CD14-positive monocyte (primary cell): ENCODE measurements at regions of chr13 and their contacts with region 1.

Region 1: GRCh38 chr13:28475916-28476725 is 18.8 kb downstream of the FLT1 start:
- DNase-seq: peak; percentile 74 to 91 (median 86)
- H3K4me3 ChIP-seq: no peak overlapping the region
- H3K4me3 Mint-ChIP-seq: no peak overlapping the region
- H3K27ac ChIP-seq: peak overlapping the region in 1 of 2 donors; percentile 22
- H3K27ac Mint-ChIP-seq: peak overlapping the region; percentile 71 to 91 (median 80)
- H3K4me1 ChIP-seq: peaks cover 24 to 42% of the 10 kb centered on the region in 2 donors
- H3K4me1 Mint-ChIP-seq: peaks cover 37% of the 10 kb centered on the region
- H3K27me3 ChIP-seq: peaks cover 2 to 10% of the 10 kb centered on the region in 2 donors
- H3K27me3 Mint-ChIP-seq: peaks cover 2 to 10% (median 4%) of the 10 kb centered on the region in 3 donors
- CTCF ChIP-seq: no peak

Region 2: GRCh38 chr13:28442839-28443238 is 33.3 kb before region 1 on chr13:
- intact Hi-C with region 1: no loop called
- DNase-seq: no peak
- H3K4me3 ChIP-seq: no peak overlapping the region
- H3K4me3 Mint-ChIP-seq: no peak overlapping the region
- H3K27ac ChIP-seq: no peak overlapping the region
- H3K27ac Mint-ChIP-seq: no peak overlapping the region
- H3K4me1 ChIP-seq: no peaks in the 10 kb centered on the region
- H3K4me1 Mint-ChIP-seq: no peaks in the 10 kb centered on the region
- H3K27me3 ChIP-seq: peaks cover 3 to 6% of the 10 kb centered on the region in 2 donors
- H3K27me3 Mint-ChIP-seq: peaks cover 0 to 15% (median 12%) of the 10 kb centered on the region in 3 donors
- CTCF ChIP-seq: no peak

Region 3: DNA sequence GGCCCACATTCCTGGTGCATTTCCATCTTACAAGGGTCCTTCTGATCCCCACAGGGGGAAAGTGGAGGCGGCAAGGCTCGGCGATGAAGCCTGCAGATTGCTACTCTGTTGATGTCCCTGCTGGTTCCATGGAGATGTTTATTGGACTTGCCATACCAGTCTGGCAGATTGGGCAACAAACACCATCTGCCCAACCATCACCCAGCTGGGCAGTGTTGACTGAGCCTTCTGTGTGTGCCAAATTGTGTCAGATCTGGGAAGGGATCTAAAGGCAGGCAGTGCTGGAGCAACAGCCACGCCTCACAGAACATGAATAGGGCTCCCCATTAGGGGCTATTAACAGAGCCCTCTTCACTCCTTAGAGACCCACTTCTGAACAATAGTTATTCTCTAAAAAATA is 16.2 kb before region 1 on chr13:
- intact Hi-C with region 1: no loop called
- DNase-seq: no peak
- H3K4me3 ChIP-seq: no peak overlapping the region
- H3K4me3 Mint-ChIP-seq: no peak overlapping the region
- H3K27ac ChIP-seq: no peak overlapping the region
- H3K27ac Mint-ChIP-seq: no peak overlapping the region
- H3K4me1 ChIP-seq: no peaks in the 10 kb centered on the region
- H3K4me1 Mint-ChIP-seq: no peaks in the 10 kb centered on the region
- H3K27me3 ChIP-seq: peaks cover 7 to 12% of the 10 kb centered on the region in 2 donors
- H3K27me3 Mint-ChIP-seq: peaks cover 10 to 30% (median 14%) of the 10 kb centered on the region in 3 donors
- CTCF ChIP-seq: no peak

Region 4: DNA sequence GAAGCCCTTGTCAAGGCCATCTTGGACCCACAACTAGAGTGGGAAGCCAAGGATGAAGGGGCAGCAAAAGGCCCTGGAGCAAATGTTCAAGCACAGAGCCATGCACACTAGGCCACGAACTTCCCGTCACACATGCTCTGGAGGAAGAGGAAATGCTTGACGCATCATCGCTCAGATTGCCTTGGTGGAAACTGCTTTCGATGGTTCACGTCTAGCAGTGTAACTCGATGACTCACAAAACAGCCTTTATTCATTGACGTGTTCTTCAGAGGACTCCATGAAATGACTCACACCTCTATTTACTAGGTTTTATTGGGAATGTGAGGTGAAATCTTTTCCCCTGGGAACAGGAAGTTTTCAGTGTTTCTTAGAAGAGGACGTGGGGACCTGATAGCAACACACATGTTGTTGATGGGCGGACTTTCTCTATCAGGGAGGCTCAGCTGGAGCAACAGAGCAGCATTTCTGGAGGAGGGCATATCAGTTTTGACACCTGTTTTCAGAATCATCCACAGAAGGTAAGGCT is 98.6 kb after region 1 on chr13:
- intact Hi-C with region 1: loop called (anchors 2 to 10 kb)
- DNase-seq: peak; percentile 95 to 100 (median 100)
- H3K4me3 ChIP-seq: no peak overlapping the region
- H3K4me3 Mint-ChIP-seq: peak overlapping the region in 1 of 2 donors; percentile 54
- H3K27ac ChIP-seq: peak overlapping the region; percentile 79 to 93
- H3K27ac Mint-ChIP-seq: peak overlapping the region; percentile 98 to 100 (median 100)
- H3K4me1 ChIP-seq: peaks cover 41 to 49% of the 10 kb centered on the region in 2 donors
- H3K4me1 Mint-ChIP-seq: peaks cover 48% of the 10 kb centered on the region
- H3K27me3 ChIP-seq: peaks cover 0 to 3% of the 10 kb centered on the region in 2 donors
- H3K27me3 Mint-ChIP-seq: peaks cover 6 to 21% (median 12%) of the 10 kb centered on the region in 3 donors
- CTCF ChIP-seq: no peak

Region 5: DNA sequence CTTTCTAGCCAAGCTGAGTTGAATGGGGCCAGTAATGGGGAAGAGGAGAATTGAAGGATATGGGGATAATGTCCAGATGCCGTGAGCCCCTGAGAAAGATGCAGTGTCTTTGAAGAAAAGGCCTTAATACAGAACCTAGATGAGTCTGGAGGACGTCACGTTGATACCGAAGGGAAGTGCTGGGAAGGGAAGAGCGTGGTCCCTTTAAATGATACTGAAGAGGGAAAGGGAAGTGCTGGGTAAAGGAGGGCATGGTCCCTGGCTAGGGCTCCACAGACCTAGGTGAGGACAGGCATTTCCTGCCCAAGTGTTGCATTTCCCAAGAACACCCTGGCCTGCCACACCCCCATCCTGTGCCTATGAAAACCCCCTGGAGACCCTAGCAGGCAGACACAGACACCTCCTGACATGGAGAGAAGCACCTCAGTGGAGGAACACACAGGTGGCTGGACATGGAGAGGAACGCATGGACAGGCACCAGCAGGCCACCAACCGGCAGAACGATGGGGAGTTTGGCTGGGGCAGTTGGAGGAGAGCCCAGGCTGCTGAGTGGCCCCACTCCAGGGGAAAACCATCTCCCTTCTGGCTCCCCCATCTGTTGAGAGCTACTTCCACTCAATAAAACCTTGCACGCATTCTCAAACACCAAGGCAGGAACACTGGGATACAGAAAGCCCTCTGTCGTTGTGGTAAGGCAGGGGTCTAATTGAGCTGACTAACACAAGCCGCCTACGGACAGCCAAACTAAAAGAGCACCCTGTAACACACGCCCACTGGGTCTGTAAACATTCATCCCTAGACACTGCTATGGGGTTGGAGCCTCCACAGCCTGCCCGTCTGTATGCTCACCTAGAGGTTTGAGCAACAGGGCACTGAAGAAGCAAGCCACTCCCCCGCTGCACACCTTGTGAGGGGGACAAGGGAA is 147.9 kb after region 1 on chr13:
- intact Hi-C with region 1: loop called in 1 of 2 experiments (anchors 5 kb)
- DNase-seq: peak; percentile 18 to 48 (median 31)
- H3K4me3 ChIP-seq: peak overlapping the region in 1 of 3 experiments; percentile 25
- H3K4me3 Mint-ChIP-seq: peak overlapping the region; percentile 16 to 32
- H3K27ac ChIP-seq: peak overlapping the region in 1 of 2 donors; percentile 47
- H3K27ac Mint-ChIP-seq: peak overlapping the region; percentile 58 to 89 (median 70)
- H3K4me1 ChIP-seq: peaks cover 67 to 73% of the 10 kb centered on the region in 2 donors
- H3K4me1 Mint-ChIP-seq: peaks cover 72% of the 10 kb centered on the region
- H3K27me3 ChIP-seq: no peaks in the 10 kb centered on the region
- H3K27me3 Mint-ChIP-seq: no peaks in the 10 kb centered on the region
- CTCF ChIP-seq: no peak

Region 6: GRCh38 chr13:29111446-29111845 is 635.3 kb after region 1 on chr13:
- intact Hi-C with region 1: no loop called
- DNase-seq: no peak
- H3K4me3 ChIP-seq: no peak overlapping the region
- H3K4me3 Mint-ChIP-seq: no peak overlapping the region
- H3K27ac ChIP-seq: no peak overlapping the region
- H3K27ac Mint-ChIP-seq: no peak overlapping the region
- H3K4me1 ChIP-seq: no peaks in the 10 kb centered on the region
- H3K4me1 Mint-ChIP-seq: no peaks in the 10 kb centered on the region
- H3K27me3 ChIP-seq: no peaks in the 10 kb centered on the region
- H3K27me3 Mint-ChIP-seq: peaks cover 0 to 2% (median 0%) of the 10 kb centered on the region in 3 donors
- CTCF ChIP-seq: no peak